ENCODE measurements at regions of chr17 and their contacts with region 1.

Region 1: GRCh38 chr17:2484876-2485275 is 26.8 kb downstream of the METTL16 start:
- DNase-seq: no peak
- H3K4me3 ChIP-seq: no peak overlapping the region
- CTCF ChIP-seq: no peak

Region 2: GRCh38 chr17:2259769-2260536 is 224.9 kb before region 1 on chr17:
- in situ Hi-C with region 1: no loop called
- DNase-seq: no peak
- H3K4me3 ChIP-seq: no peak overlapping the region
- CTCF ChIP-seq: no peak

Region 3: DNA sequence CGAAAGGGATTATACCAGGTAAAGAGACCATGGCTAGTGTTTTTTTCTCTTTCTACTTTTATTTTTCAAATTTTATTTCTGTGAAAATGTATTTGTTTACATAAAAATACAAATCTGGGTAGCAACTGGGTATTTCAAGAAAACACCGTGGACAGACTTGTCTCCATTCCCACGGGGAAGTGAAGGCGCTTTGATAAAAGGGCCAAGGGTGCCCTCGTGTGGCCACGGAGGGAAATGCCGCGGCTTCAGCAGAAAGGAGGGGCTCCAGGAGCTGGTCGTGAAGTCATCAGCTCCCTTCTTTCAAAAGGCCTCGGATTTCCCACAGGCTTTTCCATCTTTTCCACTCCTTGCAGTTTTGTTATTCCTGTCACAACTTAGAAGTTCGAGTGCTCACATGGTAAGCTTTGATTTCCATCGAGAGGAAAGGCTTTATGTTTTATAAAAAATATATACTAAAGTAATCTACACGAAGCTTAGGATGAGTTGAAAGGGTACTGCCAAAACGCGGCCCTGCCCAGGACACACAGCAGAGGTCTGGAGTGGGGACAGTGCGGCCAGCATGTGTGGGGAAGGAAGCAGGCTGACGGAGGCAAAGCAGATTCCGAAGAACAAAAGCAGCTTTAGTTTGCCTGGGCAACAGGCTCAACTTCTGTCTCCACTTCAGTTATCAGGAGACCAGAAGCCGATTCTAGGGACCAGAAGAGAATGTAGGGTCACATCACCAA is 68.7 kb before region 1 on chr17:
- in situ Hi-C with region 1: loop called (anchors 10 kb)
- DNase-seq: peak; percentile 81
- H3K4me3 ChIP-seq: no peak overlapping the region
- CTCF ChIP-seq: peak; percentile 92

Region 4: GRCh38 chr17:2571523-2572303 is 86.8 kb after region 1 on chr17:
- in situ Hi-C with region 1: no loop called
- DNase-seq: no peak
- H3K4me3 ChIP-seq: no peak overlapping the region
- CTCF ChIP-seq: no peak

Region 5: DNA sequence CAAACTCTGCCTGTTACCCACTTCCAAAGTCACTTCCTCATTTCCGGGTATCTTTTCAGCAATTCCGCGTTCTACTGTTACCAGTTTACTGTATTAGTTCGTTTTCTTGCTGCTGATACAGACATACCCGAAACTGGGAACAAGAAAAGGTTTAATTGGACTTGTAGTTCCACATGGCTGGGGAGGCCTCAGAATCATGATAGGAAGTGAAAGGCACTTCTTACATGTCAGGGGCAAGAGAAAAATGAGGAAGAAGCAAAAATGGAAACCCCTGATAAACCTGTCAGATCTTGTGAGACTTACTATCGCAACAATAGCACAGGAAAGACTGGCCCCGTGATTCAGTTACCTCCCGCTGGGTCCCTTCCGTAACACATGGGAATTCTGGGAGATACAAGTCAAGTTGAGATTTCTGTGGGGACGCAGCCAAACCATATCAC is 139.4 kb after region 1 on chr17:
- in situ Hi-C with region 1: loop called (anchors 25 kb)
- DNase-seq: no peak
- H3K4me3 ChIP-seq: no peak overlapping the region
- CTCF ChIP-seq: no peak

Measured in astrocyte of the cerebellum (primary cell).